ENCODE measurements at regions of chr2 and their contacts with region 1.

Region 1: DNA sequence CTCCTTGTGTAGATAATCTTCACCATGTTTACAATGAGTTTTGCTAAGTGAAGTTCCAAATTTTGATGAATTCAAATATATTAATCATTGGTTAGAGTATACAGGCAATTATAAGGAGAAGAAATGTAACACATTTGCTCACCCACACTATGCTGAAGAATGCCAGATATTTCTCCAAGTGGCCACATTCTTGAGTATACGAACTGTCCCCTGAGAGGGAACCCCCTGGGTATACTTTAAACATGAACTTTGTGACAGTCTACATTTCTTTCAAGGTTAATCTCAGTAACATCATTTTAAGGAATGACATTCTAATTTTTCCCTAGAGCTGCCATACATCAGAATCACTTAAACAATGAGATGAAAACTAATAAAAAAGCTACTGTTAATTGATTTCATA is 39.8 kb upstream of the CDKL4 start:
- DNase-seq: no peak
- H3K27ac ChIP-seq: no peak overlapping the region
- CTCF ChIP-seq: no peak

Region 2: GRCh38 chr2:38163006-38163405 is 1120.6 kb before region 1 on chr2:
- CTCF ChIA-PET with region 1: no interaction called
- POLR2A ChIA-PET with region 1: no interaction called
- DNase-seq: no peak
- H3K27ac ChIP-seq: no peak overlapping the region
- CTCF ChIP-seq: no peak

Region 3: GRCh38 chr2:39300044-39300978 is 16.8 kb after region 1 on chr2:
- CTCF ChIA-PET with region 1: interaction called, 3 read pairs
- POLR2A ChIA-PET with region 1: interaction called, 10 read pairs
- DNase-seq: no peak
- H3K27ac ChIP-seq: no peak overlapping the region
- CTCF ChIP-seq: no peak